ENCODE measurements at regions of chr9 and their contacts with region 1.

Region 1: GRCh38 chr9:72364679-72365524 is at the start of gene ZFAND5:
- DNase-seq: peak; percentile 96 to 99
- H3K4me3 ChIP-seq: peak within 1 kb of the TSS; percentile 92 to 99
- H3K27ac ChIP-seq: peak within 1 kb of the TSS; percentile 100
- H3K4me1 ChIP-seq: peaks cover 0 to 11% of the 10 kb centered on the region in 2 donors
- H3K27me3 ChIP-seq: no peaks in the 10 kb centered on the region
- CTCF ChIP-seq: no peak
- total RNA-seq, gene ZFAND5: 189 TPM

Region 2: DNA sequence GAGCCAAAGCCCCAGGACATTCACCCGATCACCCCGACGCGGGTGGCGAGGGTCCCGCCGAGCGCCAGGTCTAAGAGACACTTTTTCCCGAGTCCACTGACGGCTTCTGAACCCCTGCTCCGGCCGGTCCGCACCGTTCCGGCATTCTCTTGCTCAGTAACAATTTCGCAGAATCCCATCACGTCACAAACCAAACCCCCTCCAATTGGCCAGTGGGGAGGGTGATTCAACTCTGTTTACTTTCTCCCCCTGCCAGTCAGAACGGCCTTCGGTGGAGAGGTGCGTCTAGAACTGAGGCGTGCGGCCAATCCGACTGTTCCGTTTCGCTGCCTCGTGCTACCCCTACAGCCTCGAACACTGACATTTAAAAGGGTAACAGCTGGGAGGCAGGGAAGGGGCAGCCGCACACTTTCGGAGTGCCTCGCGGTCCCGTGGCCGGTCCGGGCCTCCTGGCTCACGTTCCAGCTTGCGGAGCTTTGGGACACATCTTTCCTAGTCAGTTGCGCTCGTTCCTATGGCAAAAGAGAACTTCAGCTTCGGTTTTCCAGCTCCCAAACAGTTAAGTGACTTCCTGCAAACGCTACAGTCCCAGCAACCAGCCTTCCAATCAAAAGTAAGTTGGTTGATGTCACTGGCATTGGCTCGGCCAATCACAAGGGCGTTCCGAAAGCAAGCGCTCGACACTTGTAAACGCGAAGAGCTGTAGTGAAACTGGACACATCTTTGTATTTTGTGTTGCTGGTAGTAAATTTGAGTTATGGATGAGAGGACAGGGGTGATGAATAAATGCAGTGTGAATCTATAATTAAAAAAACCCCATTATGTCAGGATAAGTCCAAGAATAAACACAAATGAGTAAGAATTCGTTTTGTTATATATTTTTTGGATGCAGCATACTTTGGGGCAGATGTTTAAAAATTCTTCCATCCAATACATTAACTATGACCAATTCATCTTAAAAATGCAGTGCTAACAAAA is 1950.8 kb before region 1 on chr9 and contains the start of gene KLF9:
- intact Hi-C with region 1: loop called (anchors 10 kb)
- DNase-seq: peak; percentile 95 to 98
- H3K4me3 ChIP-seq: peak within 1 kb of the TSS; percentile 92 to 94
- H3K27ac ChIP-seq: peak within 1 kb of the TSS; percentile 100
- H3K4me1 ChIP-seq: peaks cover 5 to 37% of the 10 kb centered on the region in 2 donors
- H3K27me3 ChIP-seq: no peaks in the 10 kb centered on the region
- CTCF ChIP-seq: no peak
- total RNA-seq, gene KLF9: 98.7 TPM

Region 3: DNA sequence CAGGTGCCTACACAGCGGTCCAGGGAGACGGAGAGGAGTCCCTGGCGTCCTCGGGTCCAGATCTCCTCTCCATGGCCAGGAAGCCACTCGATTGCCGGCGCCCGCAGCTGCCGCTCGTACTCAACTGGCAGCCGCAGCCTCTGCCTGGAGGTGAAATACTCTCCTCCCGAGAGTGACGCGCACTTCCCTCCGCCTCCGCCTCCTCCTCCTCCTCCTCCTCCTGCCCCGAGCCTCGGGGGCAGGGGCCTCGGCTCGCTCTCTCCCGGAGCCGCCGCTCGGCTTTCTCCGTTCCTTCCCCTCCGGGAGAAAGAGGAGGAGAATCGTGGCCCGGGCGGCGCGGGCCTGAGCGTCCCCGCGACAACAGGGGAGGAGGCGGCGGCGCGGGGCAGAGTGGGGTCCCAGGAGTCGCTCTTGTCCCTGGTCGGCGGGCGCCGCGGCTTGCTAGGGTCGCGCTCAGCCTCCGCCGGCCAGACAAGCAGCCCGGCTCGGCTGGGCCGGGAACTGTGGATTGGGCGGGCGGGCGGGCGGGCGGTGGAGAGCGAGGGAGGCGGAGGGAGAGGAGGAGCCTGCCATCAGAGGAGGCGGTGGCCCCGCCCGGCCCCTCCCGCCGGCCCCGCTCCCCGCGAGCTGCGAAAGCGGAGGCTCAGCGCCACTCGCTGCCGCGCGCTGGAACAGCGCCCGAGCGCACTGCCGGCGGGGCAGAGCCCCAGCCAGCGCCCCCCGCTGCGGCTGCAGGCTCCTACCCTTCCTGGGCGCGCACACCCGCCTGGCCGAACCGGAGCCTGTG is 596.3 kb before region 1 on chr9 and contains the start of gene CEMIP2:
- intact Hi-C with region 1: loop called (anchors 5 kb)
- DNase-seq: peak; percentile 44 to 92
- H3K4me3 ChIP-seq: peak within 1 kb of the TSS; percentile 78 to 89
- H3K27ac ChIP-seq: peak within 1 kb of the TSS; percentile 96 to 99
- H3K4me1 ChIP-seq: peaks cover 0 to 21% of the 10 kb centered on the region in 2 donors
- H3K27me3 ChIP-seq: no peaks in the 10 kb centered on the region
- CTCF ChIP-seq: peak in 1 of 3 experiments; percentile 18
- total RNA-seq, gene CEMIP2: 34.4 TPM

Region 4: GRCh38 chr9:71929791-71930440 is 435.0 kb before region 1 on chr9:
- intact Hi-C with region 1: loop called (anchors 10 kb)
- DNase-seq: no peak
- H3K4me3 ChIP-seq: no peak overlapping the region
- H3K27ac ChIP-seq: peak overlapping the region in 1 of 2 donors; percentile 24
- H3K4me1 ChIP-seq: no peaks in the 10 kb centered on the region
- H3K27me3 ChIP-seq: no peaks in the 10 kb centered on the region
- CTCF ChIP-seq: no peak

Region 5: GRCh38 chr9:72149231-72149975 is 215.5 kb before region 1 on chr9 and contains the start of gene GDA:
- intact Hi-C with region 1: no loop called
- DNase-seq: no peak
- H3K4me3 ChIP-seq: peak within 1 kb of the TSS; percentile 8 to 36
- H3K27ac ChIP-seq: no peak within 1 kb of the TSS
- H3K4me1 ChIP-seq: no peaks in the 10 kb centered on the region
- H3K27me3 ChIP-seq: no peaks in the 10 kb centered on the region
- CTCF ChIP-seq: no peak
- total RNA-seq, gene GDA: not detected

Region 6: DNA sequence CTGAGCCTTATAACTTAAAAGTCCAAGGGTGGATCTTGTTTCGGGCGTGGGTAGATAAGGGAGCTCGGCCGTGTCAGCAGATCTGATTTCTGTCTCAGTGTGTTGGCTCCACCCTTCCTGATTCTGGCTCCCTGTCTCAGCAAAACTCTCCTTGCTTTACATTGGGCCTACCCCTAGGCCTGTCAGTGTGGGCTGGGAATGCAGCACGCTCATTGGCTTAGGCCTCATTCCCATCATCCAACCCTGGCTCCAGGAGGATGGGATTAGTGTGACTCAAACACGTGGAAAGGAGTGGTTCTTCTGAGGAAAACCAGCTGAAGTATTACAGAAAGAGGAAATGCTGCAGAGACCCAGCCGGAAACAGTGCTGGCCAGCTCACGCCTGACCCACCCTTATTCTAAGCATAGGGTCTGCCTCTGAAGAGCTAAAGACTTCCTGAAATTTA is 59.8 kb before region 1 on chr9:
- intact Hi-C with region 1: loop called (anchors 2 kb)
- DNase-seq: peak; percentile 91 to 93
- H3K4me3 ChIP-seq: peak overlapping the region; percentile 57 to 62
- H3K27ac ChIP-seq: peak overlapping the region; percentile 78 to 81
- H3K4me1 ChIP-seq: no peaks in the 10 kb centered on the region
- H3K27me3 ChIP-seq: no peaks in the 10 kb centered on the region
- CTCF ChIP-seq: no peak

Region 7: DNA sequence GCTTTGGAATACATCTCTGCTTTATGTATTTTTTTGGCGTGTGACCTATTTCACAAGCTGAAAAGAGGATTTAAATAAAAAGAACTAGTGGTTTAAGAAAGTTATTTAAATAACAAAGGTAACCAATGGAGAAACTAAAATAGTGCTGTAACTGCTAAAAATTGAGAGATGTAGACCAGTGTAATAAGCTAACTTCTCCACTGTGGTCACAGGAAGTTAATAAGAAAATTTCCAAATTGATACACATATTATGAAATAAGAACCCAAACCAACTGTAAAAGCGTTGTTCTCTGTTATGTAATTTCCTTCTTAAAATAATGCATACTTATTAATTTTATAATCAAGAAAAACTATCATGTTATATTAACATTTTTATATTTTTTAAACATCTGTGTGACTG is 29.2 kb after region 1 on chr9:
- intact Hi-C with region 1: no loop called
- DNase-seq: no peak
- H3K4me3 ChIP-seq: no peak overlapping the region
- H3K27ac ChIP-seq: no peak overlapping the region
- H3K4me1 ChIP-seq: peaks cover 0 to 5% of the 10 kb centered on the region in 2 donors
- H3K27me3 ChIP-seq: no peaks in the 10 kb centered on the region
- CTCF ChIP-seq: no peak

Region 8: GRCh38 chr9:72592502-72593403 is 227.9 kb after region 1 on chr9:
- intact Hi-C with region 1: loop called (anchors 5 kb)
- DNase-seq: no peak
- H3K4me3 ChIP-seq: no peak overlapping the region
- H3K27ac ChIP-seq: no peak overlapping the region
- H3K4me1 ChIP-seq: peaks cover 0 to 6% of the 10 kb centered on the region in 2 donors
- H3K27me3 ChIP-seq: no peaks in the 10 kb centered on the region
- CTCF ChIP-seq: peak; percentile 74 to 82 (median 78)

Region 9: GRCh38 chr9:72871685-72872084 is 506.8 kb after region 1 on chr9:
- intact Hi-C with region 1: no loop called
- DNase-seq: no peak
- H3K4me3 ChIP-seq: no peak overlapping the region
- H3K27ac ChIP-seq: no peak overlapping the region
- H3K4me1 ChIP-seq: peaks cover 3 to 29% of the 10 kb centered on the region in 2 donors
- H3K27me3 ChIP-seq: no peaks in the 10 kb centered on the region
- CTCF ChIP-seq: peak in 2 of 3 experiments; percentile 6 to 30

Region 10: DNA sequence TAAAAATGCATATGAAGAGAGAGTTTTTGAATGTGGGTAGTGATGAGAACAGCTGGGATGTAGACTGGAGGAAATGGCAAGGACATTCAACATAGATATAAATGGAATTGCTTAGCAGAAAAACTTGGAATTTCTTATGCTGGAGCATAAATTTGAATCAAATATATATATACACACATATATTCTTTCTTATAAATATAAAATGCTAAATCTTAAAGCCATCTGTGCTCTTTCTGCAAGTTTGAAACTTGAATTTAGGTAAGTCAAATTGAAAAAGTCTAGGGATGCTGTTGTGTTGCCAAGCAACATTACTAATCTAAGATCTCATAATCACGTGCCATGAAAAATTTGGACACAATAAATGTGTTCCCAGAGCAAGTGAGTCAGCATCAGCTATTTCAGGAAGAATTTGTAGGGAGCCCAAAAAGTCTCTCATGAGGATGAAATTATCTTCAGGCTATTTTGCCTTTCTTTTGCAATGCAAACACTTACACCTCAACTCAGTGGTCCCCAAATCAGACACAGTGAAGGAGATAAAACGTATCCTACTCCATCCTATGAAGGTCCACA is 646.4 kb after region 1 on chr9:
- intact Hi-C with region 1: loop called (anchors 5 kb)
- DNase-seq: no peak
- H3K4me3 ChIP-seq: no peak overlapping the region
- H3K27ac ChIP-seq: peak overlapping the region; percentile 77 to 81
- H3K4me1 ChIP-seq: peaks cover 0 to 11% of the 10 kb centered on the region in 2 donors
- H3K27me3 ChIP-seq: no peaks in the 10 kb centered on the region
- CTCF ChIP-seq: no peak